ENCODE measurements at regions of chr9 and their contacts with region 1.

Region 1: DNA sequence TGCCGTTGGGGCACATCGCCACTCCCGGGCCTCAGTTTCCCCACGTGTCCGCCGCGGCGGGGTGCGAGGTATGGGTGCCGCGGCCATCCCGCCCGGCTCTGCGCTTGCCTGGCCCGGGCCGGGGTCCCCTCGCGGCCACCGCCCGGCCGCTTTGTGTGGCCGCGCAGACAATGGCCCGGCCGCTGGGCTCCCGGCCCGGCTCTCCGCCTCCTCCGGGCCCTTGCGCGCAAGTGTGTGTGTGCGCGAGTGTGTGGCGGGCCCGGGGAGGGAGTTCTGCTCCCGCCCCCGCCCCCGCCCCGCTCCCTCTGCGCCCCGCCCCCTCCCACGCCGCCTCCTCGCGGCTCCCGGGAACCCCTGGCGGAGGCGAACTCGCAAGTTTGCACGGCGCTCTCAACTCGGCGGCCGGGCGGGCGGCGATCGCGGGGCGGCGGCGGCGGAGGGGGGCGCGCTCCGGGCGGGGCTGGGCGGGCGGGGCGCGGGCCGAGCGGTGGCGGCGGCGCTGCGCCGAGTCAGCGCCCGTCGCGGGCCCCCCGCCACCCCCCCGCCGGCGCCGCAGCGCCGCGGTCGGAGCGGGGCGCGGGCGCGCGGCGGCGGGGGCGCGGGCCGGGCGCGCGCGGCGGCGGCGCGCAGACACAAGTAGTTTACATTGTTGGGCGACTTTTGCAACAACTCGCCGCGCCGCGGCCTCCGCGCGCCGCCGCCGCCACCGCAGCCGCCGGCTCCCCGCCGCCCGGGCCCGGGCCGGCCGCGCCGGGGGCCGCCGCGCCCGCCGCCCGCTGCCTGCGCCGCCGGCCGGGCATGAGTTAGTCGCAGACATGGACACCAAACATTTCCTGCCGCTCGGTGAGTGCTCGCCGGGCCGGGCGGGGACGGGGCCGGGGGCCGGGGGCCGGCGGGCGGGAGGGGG is at the start of gene RXRA:
- DNase-seq: peak; percentile 56
- H3K4me3 ChIP-seq: peak within 1 kb of the TSS; percentile 59 to 84 (median 75)
- H3K27ac ChIP-seq: peak within 1 kb of the TSS; percentile 82
- H3K4me1 ChIP-seq: peaks cover 21% of the 10 kb centered on the region
- H3K27me3 ChIP-seq: no peaks in the 10 kb centered on the region
- CTCF ChIP-seq: no peak
- POLR2A ChIP-seq: peak; percentile 80
- total RNA-seq, gene RXRA: 37.4 and 38.9 TPM in 2 replicates

Region 2: DNA sequence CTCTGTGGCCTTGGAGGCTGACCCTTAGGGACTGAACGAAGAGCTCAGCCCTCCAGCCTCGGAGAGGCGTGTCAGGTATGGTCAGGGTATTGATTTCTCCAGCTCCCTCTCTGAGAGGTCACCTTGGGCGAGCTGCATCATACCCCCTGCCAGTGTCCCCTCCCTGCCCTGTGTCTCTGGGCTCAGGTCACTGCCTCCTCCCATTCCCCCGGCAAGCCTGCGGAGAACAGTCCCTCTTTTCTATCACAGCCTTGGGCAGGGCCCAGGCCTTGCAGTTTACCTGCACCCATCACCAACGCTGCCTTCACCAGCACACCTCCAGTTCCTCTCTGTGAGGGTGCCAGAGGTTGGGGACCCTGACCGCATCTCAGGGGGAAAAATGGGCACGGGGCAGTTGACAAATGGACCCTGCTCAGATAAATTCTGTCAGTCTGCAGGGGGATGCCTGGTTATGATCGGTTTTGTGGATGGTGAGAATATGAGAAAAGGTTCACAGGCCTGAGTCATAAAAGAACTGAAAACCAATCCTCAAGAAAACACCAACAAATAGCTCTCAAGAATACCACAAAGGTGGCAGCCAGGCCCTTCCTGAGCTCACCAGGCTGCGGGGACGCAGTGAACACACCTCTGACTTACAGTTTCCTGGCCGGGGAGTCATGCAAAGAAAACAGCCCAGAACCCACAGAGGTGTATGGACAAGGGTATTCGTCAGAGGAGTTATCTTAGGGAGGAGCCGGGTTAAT is 24.5 kb before region 1 on chr9:
- CTCF ChIA-PET with region 1: no interaction called
- POLR2A ChIA-PET with region 1: no interaction called
- dilution Hi-C with region 1: no loop called
- intact Hi-C with region 1: no loop called
- DNase-seq: no peak
- H3K4me3 ChIP-seq: no peak overlapping the region
- H3K27ac ChIP-seq: no peak overlapping the region
- H3K4me1 ChIP-seq: no peaks in the 10 kb centered on the region
- H3K27me3 ChIP-seq: no peaks in the 10 kb centered on the region
- CTCF ChIP-seq: no peak
- POLR2A ChIP-seq: no peak

Region 3: GRCh38 chr9:134344068-134344799 is 18.2 kb after region 1 on chr9:
- CTCF ChIA-PET with region 1: interaction called, 8 read pairs
- POLR2A ChIA-PET with region 1: no interaction called
- dilution Hi-C with region 1: no loop called
- intact Hi-C with region 1: loop called (anchors 1 kb)
- DNase-seq: no peak
- H3K4me3 ChIP-seq: no peak overlapping the region
- H3K27ac ChIP-seq: no peak overlapping the region
- H3K4me1 ChIP-seq: peaks cover 34% of the 10 kb centered on the region
- H3K27me3 ChIP-seq: no peaks in the 10 kb centered on the region
- CTCF ChIP-seq: peak in 1 of 2 donors; percentile 14
- POLR2A ChIP-seq: no peak

Region 4: GRCh38 chr9:134375430-134376385 is 49.6 kb after region 1 on chr9:
- CTCF ChIA-PET with region 1: interaction called, 3 read pairs
- POLR2A ChIA-PET with region 1: no interaction called
- dilution Hi-C with region 1: no loop called
- intact Hi-C with region 1: loop called (anchors 2 kb)
- DNase-seq: peak; percentile 44
- H3K4me3 ChIP-seq: no peak overlapping the region
- H3K27ac ChIP-seq: peak overlapping the region; percentile 63
- H3K4me1 ChIP-seq: peaks cover 36% of the 10 kb centered on the region
- H3K27me3 ChIP-seq: no peaks in the 10 kb centered on the region
- CTCF ChIP-seq: peak in 1 of 2 donors; percentile 5
- POLR2A ChIP-seq: no peak

Region 5: GRCh38 chr9:134434894-134435506 is 108.9 kb after region 1 on chr9:
- CTCF ChIA-PET with region 1: interaction called, 4 read pairs
- POLR2A ChIA-PET with region 1: no interaction called
- dilution Hi-C with region 1: no loop called
- intact Hi-C with region 1: loop called (anchors 2 kb)
- DNase-seq: peak; percentile 94
- H3K4me3 ChIP-seq: no peak overlapping the region
- H3K27ac ChIP-seq: peak overlapping the region; percentile 15
- H3K4me1 ChIP-seq: peaks cover 7% of the 10 kb centered on the region
- H3K27me3 ChIP-seq: no peaks in the 10 kb centered on the region
- CTCF ChIP-seq: no peak
- POLR2A ChIP-seq: no peak

Region 6: DNA sequence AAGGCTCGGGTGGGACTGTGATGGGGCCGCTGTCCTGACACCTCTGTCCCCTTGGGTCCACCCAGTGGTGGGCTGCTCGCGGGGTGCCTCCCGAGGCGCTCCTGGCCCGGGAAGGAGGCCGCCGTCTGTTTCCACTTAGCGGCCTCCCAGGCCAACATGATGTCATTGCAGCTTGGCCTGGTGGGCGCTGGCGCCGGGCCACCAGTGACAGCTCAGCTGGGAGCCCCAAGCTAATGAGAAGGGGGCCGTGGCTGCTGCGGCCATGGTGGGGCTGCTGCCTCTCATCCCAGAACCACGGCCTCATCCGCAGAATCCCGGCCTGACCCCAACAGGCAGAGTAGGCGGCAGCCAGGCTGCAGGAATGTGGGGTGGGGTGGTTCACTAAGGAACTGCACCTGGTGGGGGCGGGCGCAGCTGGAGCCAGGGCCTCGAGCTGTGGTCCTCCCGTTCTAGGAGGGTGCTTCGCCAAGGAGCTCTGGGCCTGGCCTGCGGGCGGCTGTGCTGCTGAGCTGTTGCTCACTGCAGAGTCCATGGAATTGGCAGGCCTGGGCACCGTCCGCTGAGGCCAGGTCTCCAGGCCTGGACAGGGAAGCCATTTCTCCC is 192.0 kb after region 1 on chr9:
- CTCF ChIA-PET with region 1: no interaction called
- POLR2A ChIA-PET with region 1: no interaction called
- dilution Hi-C with region 1: no loop called
- intact Hi-C with region 1: no loop called
- DNase-seq: no peak
- H3K4me3 ChIP-seq: no peak overlapping the region
- H3K27ac ChIP-seq: no peak overlapping the region
- H3K4me1 ChIP-seq: no peaks in the 10 kb centered on the region
- H3K27me3 ChIP-seq: no peaks in the 10 kb centered on the region
- CTCF ChIP-seq: no peak
- POLR2A ChIP-seq: no peak